Activated CD4-positive, alpha-beta memory T cell treated with anti-CD3 and anti-CD28 coated beads for 36 hours (primary cell): ENCODE measurements at regions of chr9 and their contacts with region 1.

Region 1: DNA sequence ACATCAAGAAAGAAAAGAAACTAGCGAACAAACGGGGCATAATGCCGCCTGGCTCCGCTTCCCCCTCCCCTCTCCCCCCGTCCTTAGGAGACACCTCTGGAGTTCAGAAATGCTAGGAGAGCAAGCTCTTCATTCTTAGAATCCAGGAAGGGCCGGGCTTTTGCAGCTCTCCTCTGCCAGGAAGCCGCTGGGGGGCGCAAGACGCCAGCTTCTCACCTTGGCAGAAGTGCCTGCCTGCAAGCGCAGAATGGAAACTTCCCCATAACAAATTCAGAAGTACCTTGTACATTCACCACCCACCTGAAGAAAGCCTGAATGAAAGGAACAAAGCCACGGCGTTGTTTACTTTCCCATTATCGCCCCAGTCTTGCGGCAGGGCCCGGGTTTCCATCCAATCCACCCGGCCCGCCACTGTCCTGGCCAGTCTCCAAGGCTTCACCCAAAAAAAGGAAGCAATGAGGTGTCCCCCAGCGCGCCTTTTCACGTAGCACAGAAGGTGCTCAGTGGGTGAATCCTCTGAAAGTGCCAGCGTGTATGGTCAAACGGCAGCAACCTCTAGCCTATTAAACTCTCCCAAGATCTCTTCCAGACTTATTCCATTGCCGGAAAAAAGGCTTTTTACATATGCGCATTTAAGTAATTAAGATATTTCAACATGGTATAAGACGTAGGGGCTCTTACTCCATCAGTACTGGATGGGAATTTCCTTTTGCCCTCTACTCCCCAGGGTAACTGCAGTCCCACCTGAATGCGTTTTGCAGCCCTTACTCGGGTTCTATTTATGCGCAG is 1.6 kb upstream of the GADD45G start:
- DNase-seq: peak; percentile 94
- H3K4me3 Mint-ChIP-seq: peak overlapping the region; percentile 71
- H3K27ac Mint-ChIP-seq: peak overlapping the region; percentile 58
- H3K4me1 Mint-ChIP-seq: peaks cover 28% of the 10 kb centered on the region
- H3K27me3 Mint-ChIP-seq: no peaks in the 10 kb centered on the region

Region 2: GRCh38 chr9:89418882-89419640 is 184.1 kb before region 1 on chr9:
- CTCF ChIA-PET with region 1: no interaction called
- POLR2A ChIA-PET with region 1: no interaction called
- intact Hi-C with region 1: loop called (anchors 5 kb)
- DNase-seq: peak; percentile 87
- H3K4me3 Mint-ChIP-seq: peak overlapping the region; percentile 58
- H3K27ac Mint-ChIP-seq: peak overlapping the region; percentile 100
- H3K4me1 Mint-ChIP-seq: peaks cover 92% of the 10 kb centered on the region
- H3K27me3 Mint-ChIP-seq: no peaks in the 10 kb centered on the region

Region 3: DNA sequence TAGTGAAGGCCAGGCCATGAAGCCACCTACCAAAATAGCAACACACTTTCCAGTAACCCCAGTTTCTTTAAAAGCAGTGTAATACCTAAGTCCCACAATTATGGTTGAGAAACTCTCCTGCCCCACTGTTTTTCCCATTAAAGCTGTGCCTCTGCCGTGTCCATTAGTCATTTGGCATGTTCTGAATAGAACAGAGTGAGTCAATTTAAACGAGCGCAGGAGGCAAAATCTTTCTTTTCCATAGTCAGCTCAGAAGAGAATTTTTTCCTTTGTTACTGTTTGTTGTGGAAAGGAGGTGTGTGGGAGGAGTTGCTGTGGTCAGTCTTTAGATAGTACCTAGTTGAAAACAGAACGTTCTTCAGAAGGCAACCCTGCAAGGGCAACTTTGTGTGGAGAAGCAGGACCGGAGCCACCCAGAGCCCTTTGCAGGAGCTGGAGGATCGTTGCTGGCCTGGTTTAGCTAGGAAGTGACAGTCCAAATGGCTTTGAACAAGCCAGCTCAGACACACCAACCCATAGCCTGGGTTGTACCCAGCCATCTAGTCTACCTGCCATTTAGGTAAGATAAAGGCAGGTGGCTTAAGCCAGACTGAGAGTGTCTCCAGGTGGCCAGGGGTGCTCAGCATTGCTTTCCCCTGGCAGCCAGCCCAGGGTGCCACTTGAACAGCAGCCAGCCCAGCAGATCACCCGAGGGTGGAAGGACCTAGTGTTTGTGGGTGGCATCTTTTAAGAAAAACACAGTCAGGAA is 32.0 kb after region 1 on chr9:
- CTCF ChIA-PET with region 1: interaction called, 8 read pairs
- POLR2A ChIA-PET with region 1: no interaction called
- intact Hi-C with region 1: loop called (anchors 2 kb)
- DNase-seq: peak; percentile 16
- H3K4me3 Mint-ChIP-seq: no peak overlapping the region
- H3K27ac Mint-ChIP-seq: no peak overlapping the region
- H3K4me1 Mint-ChIP-seq: peaks cover 11% of the 10 kb centered on the region
- H3K27me3 Mint-ChIP-seq: no peaks in the 10 kb centered on the region

Region 4: GRCh38 chr9:89738137-89738932 is 135.2 kb after region 1 on chr9:
- CTCF ChIA-PET with region 1: interaction called, 19 read pairs
- POLR2A ChIA-PET with region 1: interaction called, 5 read pairs
- intact Hi-C with region 1: loop called (anchors 1 kb)
- DNase-seq: no peak
- H3K4me3 Mint-ChIP-seq: no peak overlapping the region
- H3K27ac Mint-ChIP-seq: no peak overlapping the region
- H3K4me1 Mint-ChIP-seq: peaks cover 48% of the 10 kb centered on the region
- H3K27me3 Mint-ChIP-seq: no peaks in the 10 kb centered on the region

Region 5: DNA sequence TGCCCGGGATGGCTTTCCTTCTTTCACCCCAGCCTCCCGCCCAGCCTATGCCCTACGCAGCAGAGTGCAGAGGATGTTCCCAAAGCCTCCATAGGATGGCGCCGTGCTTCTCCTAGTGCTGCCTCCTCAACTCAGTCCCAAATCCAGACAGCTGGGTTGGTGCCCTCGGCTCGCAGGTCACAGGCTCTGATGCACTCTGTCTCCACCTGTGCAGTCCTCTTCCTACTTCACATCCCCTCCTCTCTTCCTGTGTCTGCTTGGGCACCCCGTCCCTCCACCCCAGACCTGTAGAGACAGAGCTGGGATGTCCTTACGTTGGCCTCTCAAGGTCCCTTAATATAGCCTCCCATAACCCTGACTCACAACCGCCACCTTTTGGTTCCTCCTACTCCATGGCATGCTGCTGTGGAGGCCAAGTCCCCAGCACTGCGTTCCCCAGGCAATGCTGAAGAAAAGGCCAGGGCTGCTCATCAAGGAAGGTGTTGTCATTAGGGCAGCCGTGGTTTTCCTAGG is 316.1 kb after region 1 on chr9:
- CTCF ChIA-PET with region 1: interaction called, 19 read pairs
- POLR2A ChIA-PET with region 1: no interaction called
- intact Hi-C with region 1: loop called (anchors 1 kb)
- DNase-seq: peak; percentile 71
- H3K4me3 Mint-ChIP-seq: no peak overlapping the region
- H3K27ac Mint-ChIP-seq: peak overlapping the region; percentile 4
- H3K4me1 Mint-ChIP-seq: peaks cover 15% of the 10 kb centered on the region
- H3K27me3 Mint-ChIP-seq: no peaks in the 10 kb centered on the region

Region 6: GRCh38 chr9:89999534-90000370 is 396.6 kb after region 1 on chr9:
- CTCF ChIA-PET with region 1: interaction called, 19 read pairs
- POLR2A ChIA-PET with region 1: no interaction called
- intact Hi-C with region 1: loop called (anchors 1 kb)
- DNase-seq: peak; percentile 85
- H3K4me3 Mint-ChIP-seq: peak overlapping the region; percentile 63
- H3K27ac Mint-ChIP-seq: peak overlapping the region; percentile 73
- H3K4me1 Mint-ChIP-seq: peaks cover 34% of the 10 kb centered on the region
- H3K27me3 Mint-ChIP-seq: no peaks in the 10 kb centered on the region